PC-9 (cell line): ENCODE measurements at regions of chr19 and their contacts with region 1.

Region 1: GRCh38 chr19:56314562-56315077 is at the start of gene ZSCAN5A:
- DNase-seq: peak; percentile 90 to 97
- H3K4me3 ChIP-seq: peak within 1 kb of the TSS; percentile 77
- H3K27ac ChIP-seq: peak within 1 kb of the TSS; percentile 88
- H3K4me1 ChIP-seq: peaks cover 15% of the 10 kb centered on the region
- H3K27me3 ChIP-seq: peaks cover 2% of the 10 kb centered on the region; the same call in 1 of the 2 replicates
- CTCF ChIP-seq: no peak
- total RNA-seq, gene ZSCAN5A: 20.5 and 23.6 TPM in 2 replicates

Region 2: DNA sequence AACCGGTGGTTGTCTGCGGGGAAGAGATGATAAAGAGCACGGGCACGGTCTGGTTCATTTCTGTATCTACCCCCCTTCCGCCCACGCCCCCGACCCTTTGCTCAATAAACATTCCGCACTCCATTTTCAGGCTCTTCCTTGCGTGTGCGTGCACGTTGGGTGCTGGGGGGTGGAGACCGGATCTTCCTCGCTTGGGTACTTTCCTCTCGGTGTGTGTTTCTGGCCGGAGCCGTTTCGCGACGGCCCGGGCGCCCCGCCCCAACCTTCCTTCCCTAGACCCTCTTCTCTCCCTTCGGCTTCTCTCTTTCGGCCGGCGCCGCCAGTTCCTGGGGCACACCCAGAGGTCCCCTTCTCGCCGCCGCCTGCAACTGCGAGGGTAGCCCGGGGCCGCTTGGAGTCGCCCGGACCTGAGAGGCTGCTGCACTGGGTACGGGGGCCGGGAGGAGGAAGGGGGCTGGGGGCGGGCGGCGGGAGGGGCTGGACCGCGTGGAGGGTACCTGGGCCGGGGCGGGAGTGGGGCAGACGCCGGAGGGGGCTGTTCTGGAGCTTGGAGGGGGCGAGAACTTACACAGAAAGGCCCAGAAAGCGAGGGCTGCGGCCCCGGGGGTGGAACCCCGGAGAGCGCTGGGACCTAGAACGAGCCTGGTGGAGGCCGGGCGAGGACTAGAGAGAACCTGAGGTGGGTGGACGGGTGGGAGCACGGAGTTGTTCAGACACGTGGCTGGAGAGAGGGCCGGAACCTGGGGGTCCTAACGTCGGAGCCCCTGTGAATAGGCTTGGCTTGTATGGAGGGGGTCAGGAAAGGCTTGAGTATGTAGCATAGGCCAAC is 671.1 kb before region 1 on chr19 and contains the start of gene ZNF581:
- CTCF ChIA-PET with region 1: no interaction called
- POLR2A ChIA-PET with region 1: interaction called, 13 read pairs
- intact Hi-C with region 1: no loop called
- DNase-seq: peak; percentile 66 to 79
- H3K4me3 ChIP-seq: peak within 1 kb of the TSS; percentile 66
- H3K27ac ChIP-seq: peak within 1 kb of the TSS; percentile 44
- H3K4me1 ChIP-seq: peaks cover 8% of the 10 kb centered on the region
- H3K27me3 ChIP-seq: no peaks in the 10 kb centered on the region
- CTCF ChIP-seq: no peak
- total RNA-seq, gene ZNF581: 53.5 and 81.9 TPM in 2 replicates

Region 3: DNA sequence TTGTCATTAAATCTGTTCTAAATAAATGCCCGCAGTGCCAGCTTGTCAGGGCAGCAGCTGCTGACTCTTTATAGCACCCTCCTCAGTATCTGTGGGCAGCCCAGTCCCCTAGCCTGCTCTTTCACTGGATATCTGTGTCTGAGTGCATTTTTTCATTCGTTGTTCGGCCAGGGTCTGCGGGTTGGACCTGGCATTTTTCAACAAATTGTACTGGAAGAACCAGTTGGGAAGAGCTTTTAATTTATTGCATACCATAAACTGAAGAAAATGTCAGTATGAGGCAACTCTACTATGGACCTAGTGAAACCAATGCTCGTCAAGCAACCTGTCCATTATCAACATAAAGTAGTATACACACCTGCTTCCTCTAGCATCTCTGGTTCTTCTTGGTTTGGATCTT is 391.1 kb before region 1 on chr19:
- CTCF ChIA-PET with region 1: no interaction called
- POLR2A ChIA-PET with region 1: no interaction called
- intact Hi-C with region 1: no loop called
- DNase-seq: no peak
- H3K4me3 ChIP-seq: no peak overlapping the region
- H3K27ac ChIP-seq: no peak overlapping the region
- H3K4me1 ChIP-seq: no peaks in the 10 kb centered on the region
- H3K27me3 ChIP-seq: peaks cover 19% of the 10 kb centered on the region
- CTCF ChIP-seq: no peak

Region 4: DNA sequence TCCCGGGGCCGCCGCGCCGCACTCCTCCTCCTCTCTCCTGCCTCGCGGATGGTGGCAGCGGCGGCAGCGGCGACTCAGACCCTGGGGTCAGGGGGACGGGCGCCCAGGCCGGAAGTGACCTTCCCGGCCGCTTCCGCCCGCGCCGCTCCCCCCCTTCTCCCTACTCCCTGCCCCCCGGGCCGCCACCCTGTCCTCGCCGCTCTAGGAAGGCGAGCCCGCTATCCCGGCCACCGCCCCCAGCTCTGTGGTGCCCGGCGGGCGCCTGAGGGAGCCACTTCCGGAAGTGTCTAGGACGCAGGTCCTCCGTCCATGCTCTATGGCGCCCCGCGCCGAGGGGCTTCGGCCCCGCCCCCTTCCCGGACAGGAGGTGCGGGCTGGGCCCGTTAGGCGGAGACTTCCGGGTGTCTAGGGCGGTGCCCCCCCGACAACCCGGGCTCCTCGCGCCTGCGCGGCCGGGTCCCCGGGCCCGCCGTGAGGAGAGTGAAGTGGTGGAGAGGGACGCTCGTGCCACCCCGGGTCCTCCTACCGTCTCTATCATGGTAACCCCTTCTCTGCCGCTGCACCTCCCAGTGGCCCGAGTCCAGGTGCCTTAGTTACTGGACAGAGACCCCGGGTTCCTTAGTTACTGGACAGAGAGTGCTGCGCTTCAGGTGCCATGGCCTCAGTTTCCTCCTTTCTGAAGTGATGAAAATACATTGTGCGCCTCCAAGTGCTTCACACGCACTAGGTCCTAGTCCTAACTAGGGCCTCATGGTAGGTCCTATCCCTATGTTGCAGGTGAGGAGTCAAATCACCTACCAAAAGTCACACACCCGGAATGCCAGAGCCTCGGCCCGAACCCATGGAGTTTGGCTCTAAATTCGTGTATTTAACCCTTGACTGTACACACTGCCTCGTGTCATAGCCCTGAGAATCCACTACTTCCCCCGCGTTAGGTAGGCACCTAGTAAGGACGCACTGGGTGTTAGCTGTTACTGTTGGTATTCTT is 193.1 kb before region 1 on chr19 and contains the start of gene ZNF787:
- CTCF ChIA-PET with region 1: no interaction called
- POLR2A ChIA-PET with region 1: interaction called, 4 read pairs
- intact Hi-C with region 1: loop called (anchors 1 kb)
- DNase-seq: peak; percentile 93 to 100
- H3K4me3 ChIP-seq: peak within 1 kb of the TSS; percentile 94
- H3K27ac ChIP-seq: peak within 1 kb of the TSS; percentile 81
- H3K4me1 ChIP-seq: peaks cover 10% of the 10 kb centered on the region
- H3K27me3 ChIP-seq: no peaks in the 10 kb centered on the region
- CTCF ChIP-seq: no peak
- total RNA-seq, gene ZNF787: 51.4 and 51.5 TPM in 2 replicates

Region 5: GRCh38 chr19:56170261-56170660 is 144.4 kb before region 1 on chr19:
- CTCF ChIA-PET with region 1: no interaction called
- POLR2A ChIA-PET with region 1: interaction called, 20 read pairs
- intact Hi-C with region 1: no loop called
- DNase-seq: peak; percentile 67 to 80
- H3K4me3 ChIP-seq: no peak overlapping the region
- H3K27ac ChIP-seq: no peak overlapping the region
- H3K4me1 ChIP-seq: peaks cover 5% of the 10 kb centered on the region
- H3K27me3 ChIP-seq: peaks cover 21% of the 10 kb centered on the region
- CTCF ChIP-seq: no peak

Region 6: GRCh38 chr19:56273563-56274117 is 41.0 kb before region 1 on chr19:
- CTCF ChIA-PET with region 1: interaction called, 3 read pairs
- POLR2A ChIA-PET with region 1: interaction called, 22 read pairs
- intact Hi-C with region 1: no loop called
- DNase-seq: no peak
- H3K4me3 ChIP-seq: no peak overlapping the region
- H3K27ac ChIP-seq: no peak overlapping the region
- H3K4me1 ChIP-seq: no peaks in the 10 kb centered on the region
- H3K27me3 ChIP-seq: no peaks in the 10 kb centered on the region
- CTCF ChIP-seq: no peak

Region 7: GRCh38 chr19:56350416-56351045 is 35.9 kb after region 1 on chr19:
- CTCF ChIA-PET with region 1: no interaction called
- POLR2A ChIA-PET with region 1: no interaction called
- intact Hi-C with region 1: no loop called
- DNase-seq: peak in 1 of 2 experiments; percentile 28
- H3K4me3 ChIP-seq: no peak overlapping the region
- H3K27ac ChIP-seq: no peak overlapping the region
- H3K4me1 ChIP-seq: no peaks in the 10 kb centered on the region
- H3K27me3 ChIP-seq: peaks cover 48% of the 10 kb centered on the region
- CTCF ChIP-seq: peak; percentile 92

Region 8: GRCh38 chr19:56504581-56504980 is 190.0 kb after region 1 on chr19:
- CTCF ChIA-PET with region 1: no interaction called
- POLR2A ChIA-PET with region 1: no interaction called
- intact Hi-C with region 1: no loop called
- DNase-seq: no peak
- H3K4me3 ChIP-seq: no peak overlapping the region
- H3K27ac ChIP-seq: no peak overlapping the region
- H3K4me1 ChIP-seq: no peaks in the 10 kb centered on the region
- H3K27me3 ChIP-seq: 0 out of 2 replicates have a peak, but pooled peaks cover 15% of the 10 kb centered on the region
- CTCF ChIP-seq: no peak

Region 9: GRCh38 chr19:57171551-57172081 is 857.0 kb after region 1 on chr19:
- CTCF ChIA-PET with region 1: no interaction called
- POLR2A ChIA-PET with region 1: interaction called, 16 read pairs
- intact Hi-C with region 1: no loop called
- DNase-seq: peak in 1 of 2 experiments; percentile 35
- H3K4me3 ChIP-seq: peak overlapping the region; percentile 42; the same call in 1 of the 2 replicates
- H3K27ac ChIP-seq: no peak overlapping the region
- H3K4me1 ChIP-seq: 0 out of 2 replicates have a peak, but pooled peaks cover 6% of the 10 kb centered on the region
- H3K27me3 ChIP-seq: peaks cover 16% of the 10 kb centered on the region; the same call in 1 of the 2 replicates
- CTCF ChIP-seq: no peak